Panc1 (cell line): ENCODE measurements at regions of chr11 and their contacts with region 1.

Region 1: GRCh38 chr11:16194566-16194965 is 161.8 kb downstream of the SOX6 start:
- DNase-seq: no peak
- ATAC-seq: no peak
- H3K4me3 ChIP-seq: no peak overlapping the region
- H3K27ac ChIP-seq: no peak overlapping the region
- H3K4me1 ChIP-seq: no peaks in the 10 kb centered on the region
- H3K27me3 ChIP-seq: no peaks in the 10 kb centered on the region
- CTCF ChIP-seq: no peak

Region 2: DNA sequence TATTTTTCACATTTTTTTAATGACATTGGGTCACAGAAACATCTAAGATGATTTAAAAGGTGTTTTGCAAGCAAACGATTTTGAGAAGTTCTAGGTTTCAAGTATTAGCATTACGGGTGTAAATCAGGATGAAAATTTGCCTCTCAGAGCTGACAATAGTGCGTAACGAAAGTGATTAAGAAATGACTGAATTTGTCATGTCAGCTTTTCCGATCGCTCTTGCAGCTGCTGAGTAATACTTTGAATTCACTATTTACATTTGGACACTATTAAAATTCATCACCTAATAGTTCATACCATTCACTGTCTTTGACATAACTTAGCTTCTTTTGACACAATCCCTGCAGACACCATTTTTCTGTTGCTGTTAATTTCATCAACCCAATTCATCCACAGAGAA is 43.4 kb before region 1 on chr11:
- CTCF ChIA-PET with region 1: no interaction called
- POLR2A ChIA-PET with region 1: interaction called, 10 read pairs
- in situ Hi-C with region 1: no loop called
- intact Hi-C with region 1: no loop called
- DNase-seq: no peak
- ATAC-seq: no peak
- H3K4me3 ChIP-seq: no peak overlapping the region
- H3K27ac ChIP-seq: no peak overlapping the region
- H3K4me1 ChIP-seq: no peaks in the 10 kb centered on the region
- H3K27me3 ChIP-seq: no peaks in the 10 kb centered on the region
- CTCF ChIP-seq: no peak